ENCODE measurements at regions of chr3 and their contacts with region 1.

Region 1: GRCh38 chr3:111539351-111540331 is 2.4 kb upstream of the CD96 start:
- DNase-seq: peak; percentile 78
- H3K4me3 Mint-ChIP-seq: peak overlapping the region; percentile 64
- H3K27ac Mint-ChIP-seq: peak overlapping the region; percentile 83
- H3K4me1 Mint-ChIP-seq: peaks cover 71% of the 10 kb centered on the region
- H3K27me3 Mint-ChIP-seq: no peaks in the 10 kb centered on the region

Region 2: GRCh38 chr3:109731620-109732473 is 1807.8 kb before region 1 on chr3:
- CTCF ChIA-PET with region 1: no interaction called
- POLR2A ChIA-PET with region 1: no interaction called
- intact Hi-C with region 1: loop called (anchors 1 kb)
- DNase-seq: peak; percentile 44
- H3K4me3 Mint-ChIP-seq: no peak overlapping the region
- H3K27ac Mint-ChIP-seq: no peak overlapping the region
- H3K4me1 Mint-ChIP-seq: peaks cover 6% of the 10 kb centered on the region
- H3K27me3 Mint-ChIP-seq: no peaks in the 10 kb centered on the region

Region 3: DNA sequence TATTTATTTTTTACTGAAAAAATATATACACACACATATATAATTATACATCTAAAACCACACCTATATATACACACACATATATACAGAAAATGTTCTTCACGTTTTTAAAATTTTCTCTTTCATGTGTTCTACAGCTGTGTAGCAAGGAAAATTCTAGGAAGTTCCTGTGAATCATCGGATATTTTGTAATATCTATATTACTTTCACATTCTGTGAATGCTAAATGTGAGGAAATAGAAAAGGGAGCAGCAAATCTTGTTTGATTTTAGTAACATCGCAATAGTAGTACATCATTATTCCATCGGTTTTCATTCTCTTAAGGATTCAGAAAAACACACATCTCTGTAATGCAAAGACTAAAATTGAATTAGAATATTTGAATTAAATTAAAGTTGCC is 1304.8 kb before region 1 on chr3:
- CTCF ChIA-PET with region 1: no interaction called
- POLR2A ChIA-PET with region 1: no interaction called
- intact Hi-C with region 1: no loop called
- DNase-seq: no peak
- H3K4me3 Mint-ChIP-seq: no peak overlapping the region
- H3K27ac Mint-ChIP-seq: no peak overlapping the region
- H3K4me1 Mint-ChIP-seq: no peaks in the 10 kb centered on the region
- H3K27me3 Mint-ChIP-seq: no peaks in the 10 kb centered on the region

Region 4: GRCh38 chr3:110314512-110315114 is 1225.0 kb before region 1 on chr3:
- CTCF ChIA-PET with region 1: interaction called, 14 read pairs
- POLR2A ChIA-PET with region 1: no interaction called
- intact Hi-C with region 1: loop called (anchors 2 kb)
- DNase-seq: peak; percentile 53
- H3K4me3 Mint-ChIP-seq: no peak overlapping the region
- H3K27ac Mint-ChIP-seq: no peak overlapping the region
- H3K4me1 Mint-ChIP-seq: peaks cover 5% of the 10 kb centered on the region
- H3K27me3 Mint-ChIP-seq: no peaks in the 10 kb centered on the region

Region 5: GRCh38 chr3:111238885-111239284 is 300.8 kb before region 1 on chr3:
- CTCF ChIA-PET with region 1: no interaction called
- POLR2A ChIA-PET with region 1: no interaction called
- intact Hi-C with region 1: loop called (anchors 2 kb)
- DNase-seq: no peak
- H3K4me3 Mint-ChIP-seq: no peak overlapping the region
- H3K27ac Mint-ChIP-seq: no peak overlapping the region
- H3K4me1 Mint-ChIP-seq: peaks cover 22% of the 10 kb centered on the region
- H3K27me3 Mint-ChIP-seq: no peaks in the 10 kb centered on the region

Region 6: DNA sequence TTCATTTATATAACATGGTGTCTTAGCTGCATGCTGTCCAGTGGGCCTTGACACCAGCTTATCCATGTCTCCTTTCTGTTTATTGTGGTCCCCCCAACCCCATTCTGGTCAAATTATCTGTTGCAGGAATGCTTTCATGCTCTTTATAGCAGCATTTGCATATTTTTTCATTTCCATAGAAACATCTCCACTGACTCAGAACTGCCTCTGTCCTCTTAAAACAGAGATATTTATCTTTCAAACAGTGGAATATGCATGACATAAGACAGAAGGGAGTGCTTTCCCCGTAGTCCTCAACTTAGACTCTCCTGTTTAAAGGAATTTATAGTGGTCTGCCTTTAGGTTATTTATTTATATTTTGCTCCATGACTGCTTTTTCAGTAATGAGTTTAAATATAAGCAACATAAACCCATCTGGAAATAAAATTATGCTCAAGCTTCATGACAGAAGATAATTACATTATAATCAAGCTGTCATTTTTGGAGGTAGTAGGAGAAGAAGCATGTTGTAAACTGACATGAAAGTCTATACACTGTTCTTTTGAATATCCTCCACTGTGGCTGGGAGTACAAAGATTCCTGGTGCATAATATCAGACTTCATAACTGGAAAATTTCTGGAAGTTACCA is 177.1 kb before region 1 on chr3:
- CTCF ChIA-PET with region 1: interaction called, 3 read pairs
- POLR2A ChIA-PET with region 1: no interaction called
- intact Hi-C with region 1: loop called (anchors 1 kb)
- DNase-seq: no peak
- H3K4me3 Mint-ChIP-seq: no peak overlapping the region
- H3K27ac Mint-ChIP-seq: no peak overlapping the region
- H3K4me1 Mint-ChIP-seq: peaks cover 3% of the 10 kb centered on the region
- H3K27me3 Mint-ChIP-seq: peaks cover 2% of the 10 kb centered on the region

Region 7: DNA sequence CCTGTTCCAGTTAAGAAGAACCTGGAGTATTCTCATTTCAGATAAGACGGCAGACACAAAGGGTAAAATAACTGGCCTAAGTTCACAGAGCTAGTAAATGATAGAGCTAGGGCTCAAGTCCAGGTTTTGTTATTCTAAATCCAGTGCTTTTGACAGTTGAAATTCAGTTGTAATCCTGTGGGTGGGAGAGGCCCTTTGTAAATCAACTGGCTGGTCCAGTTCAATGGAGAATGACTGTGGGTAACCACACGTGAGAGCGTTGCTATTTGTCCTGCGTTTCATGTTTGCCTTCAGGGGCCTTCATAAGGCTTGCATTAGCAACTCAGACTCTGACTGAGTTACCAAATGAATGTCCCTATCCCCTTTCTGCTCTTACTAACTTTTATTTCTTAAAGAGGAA is 21.8 kb before region 1 on chr3:
- CTCF ChIA-PET with region 1: no interaction called
- POLR2A ChIA-PET with region 1: no interaction called
- intact Hi-C with region 1: no loop called
- DNase-seq: no peak
- H3K4me3 Mint-ChIP-seq: no peak overlapping the region
- H3K27ac Mint-ChIP-seq: no peak overlapping the region
- H3K4me1 Mint-ChIP-seq: no peaks in the 10 kb centered on the region
- H3K27me3 Mint-ChIP-seq: no peaks in the 10 kb centered on the region

Region 8: GRCh38 chr3:111604119-111604518 is 64.5 kb after region 1 on chr3:
- CTCF ChIA-PET with region 1: interaction called, 3 read pairs
- POLR2A ChIA-PET with region 1: interaction called, 13 read pairs
- intact Hi-C with region 1: loop called (anchors 2 kb)
- DNase-seq: peak; percentile 71
- H3K4me3 Mint-ChIP-seq: peak overlapping the region; percentile 62
- H3K27ac Mint-ChIP-seq: peak overlapping the region; percentile 92
- H3K4me1 Mint-ChIP-seq: peaks cover 87% of the 10 kb centered on the region
- H3K27me3 Mint-ChIP-seq: no peaks in the 10 kb centered on the region

Measured in activated CD4-positive, alpha-beta memory T cell treated with anti-CD3 and anti-CD28 coated beads for 36 hours (primary cell).